ENCODE measurements at regions of chr5 and their contacts with region 1.

Region 1: GRCh38 chr5:68000805-68001204 is 214.8 kb upstream of the PIK3R1 start:
- DNase-seq: no peak
- ATAC-seq: no peak
- H3K4me3 ChIP-seq: no peak overlapping the region
- H3K4me3 Mint-ChIP-seq: no peak overlapping the region
- H3K27ac ChIP-seq: no peak overlapping the region
- H3K27ac Mint-ChIP-seq: no peak overlapping the region
- H3K4me1 ChIP-seq: no peaks in the 10 kb centered on the region
- H3K4me1 Mint-ChIP-seq: no peaks in the 10 kb centered on the region
- H3K27me3 ChIP-seq: no peaks in the 10 kb centered on the region
- H3K27me3 Mint-ChIP-seq: no peaks in the 10 kb centered on the region
- CTCF ChIP-seq: no peak

Region 2: GRCh38 chr5:68041293-68041692 is 40.5 kb after region 1 on chr5:
- CTCF ChIA-PET with region 1: no interaction called
- POLR2A ChIA-PET with region 1: interaction called, 11 read pairs
- intact Hi-C with region 1: no loop called
- DNase-seq: peak; percentile 61
- ATAC-seq: peak; percentile 81
- H3K4me3 ChIP-seq: peak overlapping the region in 2 of 5 experiments; percentile 8 to 41
- H3K4me3 Mint-ChIP-seq: peak overlapping the region; percentile 82
- H3K27ac ChIP-seq: peak overlapping the region; percentile 56 to 82
- H3K27ac Mint-ChIP-seq: peak overlapping the region; percentile 93
- H3K4me1 ChIP-seq: peaks cover 30 to 32% of the 10 kb centered on the region in 2 donors
- H3K4me1 Mint-ChIP-seq: peaks cover 32% of the 10 kb centered on the region
- H3K27me3 ChIP-seq: no peaks in the 10 kb centered on the region
- H3K27me3 Mint-ChIP-seq: no peaks in the 10 kb centered on the region
- CTCF ChIP-seq: no peak